GM12878 (cell line): ENCODE measurements at regions of chrX and their contacts with region 1.

Region 1: GRCh38 chrX:9708904-9709553 is 56.6 kb downstream of the GPR143 start:
- DNase-seq: peak; percentile 42
- ATAC-seq: peak; percentile 95
- H3K4me3 ChIP-seq: no peak overlapping the region
- H3K27ac ChIP-seq: no peak overlapping the region
- H3K4me1 ChIP-seq: no peaks in the 10 kb centered on the region
- H3K27me3 ChIP-seq: no peaks in the 10 kb centered on the region
- CTCF ChIP-seq: peak; percentile 81 to 91 (median 83)
- EP300 ChIP-seq: no peak
- POLR2A ChIP-seq: no peak
- RAD21 ChIP-seq: peak; percentile 91

Region 2: GRCh38 chrX:8815464-8816065 is 893.5 kb before region 1 on chrX:
- CTCF ChIA-PET with region 1: interaction called, 5 read pairs
- POLR2A ChIA-PET with region 1: no interaction called
- RAD21 ChIA-PET with region 1: no interaction called
- SMC1A ChIA-PET with region 1: interaction called, 5 read pairs
- in situ Hi-C with region 1: loop called (anchors 5 kb)
- intact Hi-C with region 1: no loop called
- DNase-seq: peak; percentile 4
- ATAC-seq: peak; percentile 79
- H3K4me3 ChIP-seq: no peak overlapping the region
- H3K27ac ChIP-seq: no peak overlapping the region
- H3K4me1 ChIP-seq: no peaks in the 10 kb centered on the region
- H3K27me3 ChIP-seq: no peaks in the 10 kb centered on the region
- CTCF ChIP-seq: peak; percentile 69 to 84 (median 78)
- EP300 ChIP-seq: no peak
- POLR2A ChIP-seq: no peak
- RAD21 ChIP-seq: peak; percentile 56

Region 3: DNA sequence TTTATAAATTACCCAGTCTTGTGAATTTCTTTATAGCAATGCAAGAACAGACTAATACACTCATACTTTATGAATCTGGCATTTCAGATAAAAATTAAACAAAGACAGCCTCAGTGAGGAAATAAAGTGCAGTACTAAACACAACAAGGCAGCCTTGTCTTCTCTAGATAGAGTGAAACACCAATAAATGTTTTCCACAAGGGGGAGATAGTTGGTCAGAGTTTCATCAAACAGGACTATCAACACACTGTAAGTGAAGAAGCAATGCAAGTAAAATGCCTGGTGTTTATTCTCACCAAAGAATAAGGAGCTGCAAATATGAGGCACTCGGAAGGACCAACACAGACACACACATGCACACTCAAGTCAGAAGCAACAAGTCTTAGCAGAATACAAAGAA is 737.9 kb before region 1 on chrX:
- CTCF ChIA-PET with region 1: no interaction called
- POLR2A ChIA-PET with region 1: no interaction called
- RAD21 ChIA-PET with region 1: no interaction called
- SMC1A ChIA-PET with region 1: no interaction called
- in situ Hi-C with region 1: loop called (anchors 5 kb)
- intact Hi-C with region 1: loop called (anchors 1 kb)
- DNase-seq: no peak
- ATAC-seq: peak; percentile 80
- H3K4me3 ChIP-seq: no peak overlapping the region
- H3K27ac ChIP-seq: no peak overlapping the region
- H3K4me1 ChIP-seq: no peaks in the 10 kb centered on the region
- H3K27me3 ChIP-seq: no peaks in the 10 kb centered on the region
- CTCF ChIP-seq: peak; percentile 15 to 36 (median 35); a peak in 3 of 6 replicates
- EP300 ChIP-seq: no peak
- POLR2A ChIP-seq: no peak
- RAD21 ChIP-seq: peak; percentile 57

Region 4: GRCh38 chrX:9464435-9465371 is 244.3 kb before region 1 on chrX and contains the start of gene TBL1X:
- CTCF ChIA-PET with region 1: no interaction called
- POLR2A ChIA-PET with region 1: no interaction called
- RAD21 ChIA-PET with region 1: interaction called, 3 read pairs
- SMC1A ChIA-PET with region 1: no interaction called
- in situ Hi-C with region 1: no loop called
- intact Hi-C with region 1: loop called (anchors 1 kb)
- DNase-seq: no peak
- ATAC-seq: peak; percentile 58
- H3K4me3 ChIP-seq: peak within 1 kb of the TSS; percentile 65
- H3K27ac ChIP-seq: peak within 1 kb of the TSS; percentile 15
- H3K4me1 ChIP-seq: peaks cover 14% of the 10 kb centered on the region
- H3K27me3 ChIP-seq: no peaks in the 10 kb centered on the region
- CTCF ChIP-seq: no peak
- EP300 ChIP-seq: no peak
- POLR2A ChIP-seq: 0 out of 2 replicates have a peak, but pooled peaks have one; percentile 38
- RAD21 ChIP-seq: no peak
- polyA plus RNA-seq, gene TBL1X: 4.4 to 4.9 TPM

Region 5: DNA sequence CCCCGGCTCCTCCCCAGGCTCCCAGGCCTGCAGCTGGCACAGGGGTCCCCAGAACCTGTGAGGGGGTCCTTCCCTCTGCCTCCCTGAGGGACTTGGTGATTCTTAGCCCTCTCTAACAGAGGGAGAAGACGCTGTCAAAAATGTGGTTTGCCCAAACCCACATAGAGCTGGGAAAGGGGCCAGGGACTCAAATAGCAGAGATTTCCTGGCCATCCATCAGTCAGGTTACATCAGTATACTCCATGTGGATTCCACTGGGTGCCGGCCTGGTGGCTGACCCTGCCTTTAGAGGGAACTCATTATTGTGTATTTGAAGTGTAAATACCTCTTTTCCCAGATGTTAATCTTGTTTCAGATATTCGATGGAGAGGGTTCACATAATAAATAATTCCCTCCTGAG is 113.9 kb before region 1 on chrX:
- CTCF ChIA-PET with region 1: no interaction called
- POLR2A ChIA-PET with region 1: no interaction called
- RAD21 ChIA-PET with region 1: no interaction called
- SMC1A ChIA-PET with region 1: no interaction called
- in situ Hi-C with region 1: no loop called
- intact Hi-C with region 1: no loop called
- DNase-seq: no peak
- ATAC-seq: no peak
- H3K4me3 ChIP-seq: no peak overlapping the region
- H3K27ac ChIP-seq: no peak overlapping the region
- H3K4me1 ChIP-seq: no peaks in the 10 kb centered on the region
- H3K27me3 ChIP-seq: no peaks in the 10 kb centered on the region
- CTCF ChIP-seq: no peak
- EP300 ChIP-seq: no peak
- POLR2A ChIP-seq: no peak
- RAD21 ChIP-seq: no peak

Region 6: DNA sequence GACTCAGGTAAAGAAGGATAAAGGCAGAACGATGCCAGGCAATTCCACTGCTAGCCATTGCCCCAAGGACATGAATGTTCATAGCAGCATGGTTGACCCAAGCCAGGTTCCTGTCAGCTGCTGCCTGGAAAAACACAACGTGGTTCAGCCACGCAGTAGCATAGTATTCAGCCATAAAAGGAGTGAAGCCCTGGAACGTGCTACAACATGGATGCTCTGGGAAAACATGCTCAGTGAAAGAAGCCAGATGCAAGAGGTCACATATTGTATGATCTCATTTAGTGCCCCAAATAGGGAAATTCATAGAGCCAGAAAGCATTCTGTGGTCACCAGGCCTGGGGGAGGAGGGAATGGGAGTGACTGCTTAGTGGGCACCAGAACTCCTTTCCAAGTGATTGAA is 73.2 kb before region 1 on chrX:
- CTCF ChIA-PET with region 1: no interaction called
- POLR2A ChIA-PET with region 1: no interaction called
- RAD21 ChIA-PET with region 1: no interaction called
- SMC1A ChIA-PET with region 1: no interaction called
- in situ Hi-C with region 1: no loop called
- intact Hi-C with region 1: no loop called
- DNase-seq: no peak
- ATAC-seq: no peak
- H3K4me3 ChIP-seq: no peak overlapping the region
- H3K27ac ChIP-seq: no peak overlapping the region
- H3K4me1 ChIP-seq: no peaks in the 10 kb centered on the region
- H3K27me3 ChIP-seq: no peaks in the 10 kb centered on the region
- CTCF ChIP-seq: no peak
- EP300 ChIP-seq: no peak
- POLR2A ChIP-seq: no peak
- RAD21 ChIP-seq: no peak

Region 7: DNA sequence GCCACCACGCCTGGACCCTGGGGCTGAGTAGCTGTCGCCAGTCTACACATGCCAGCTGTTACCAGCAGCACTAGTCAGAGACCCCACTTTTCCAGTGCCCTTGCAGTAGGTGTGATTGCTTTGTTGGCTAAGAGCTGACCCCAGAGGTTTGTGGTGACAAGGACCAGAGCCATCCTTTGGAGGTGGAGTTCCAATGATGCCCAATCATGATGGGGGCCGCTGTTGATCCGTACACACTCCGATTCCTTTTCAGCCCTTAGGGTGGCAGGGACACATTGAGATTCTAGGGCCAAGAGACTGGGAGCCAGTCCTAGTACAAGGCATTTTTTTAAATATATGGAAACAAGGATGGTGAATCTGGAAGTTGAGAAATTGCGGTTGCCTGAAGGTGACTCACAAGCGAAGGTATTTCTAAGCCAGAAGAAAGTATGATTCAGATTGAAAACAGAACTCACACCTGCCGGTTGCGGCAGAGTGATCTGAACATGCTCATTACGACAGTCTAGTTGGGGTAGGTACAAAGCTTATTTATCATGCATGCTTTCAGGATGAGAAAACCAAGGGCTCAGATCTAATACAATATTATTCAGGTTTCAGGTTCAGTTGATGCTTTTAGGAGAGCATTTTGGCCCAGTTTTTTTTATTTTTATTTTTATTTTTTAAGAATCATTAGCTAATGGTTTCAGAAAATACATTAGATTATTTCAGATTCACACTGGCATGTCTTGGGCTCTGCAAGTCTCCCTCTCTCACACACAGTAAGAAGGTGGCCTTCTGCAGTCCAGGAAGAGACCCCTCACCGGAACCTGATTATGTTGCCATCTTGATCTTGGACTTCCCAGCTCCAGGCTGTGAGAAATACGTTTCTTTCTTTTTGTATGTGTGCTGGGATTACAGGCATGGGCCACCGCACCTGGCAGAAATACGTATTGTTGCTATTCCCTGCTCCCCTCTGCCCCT is 120.6 kb after region 1 on chrX:
- CTCF ChIA-PET with region 1: no interaction called
- POLR2A ChIA-PET with region 1: no interaction called
- RAD21 ChIA-PET with region 1: no interaction called
- SMC1A ChIA-PET with region 1: no interaction called
- in situ Hi-C with region 1: no loop called
- intact Hi-C with region 1: loop called (anchors 1 kb)
- DNase-seq: peak; percentile 47
- ATAC-seq: peak; percentile 95
- H3K4me3 ChIP-seq: no peak overlapping the region
- H3K27ac ChIP-seq: peak overlapping the region; percentile 61
- H3K4me1 ChIP-seq: peaks cover 11% of the 10 kb centered on the region
- H3K27me3 ChIP-seq: no peaks in the 10 kb centered on the region; a peak in 2 of 4 replicates
- CTCF ChIP-seq: no peak
- EP300 ChIP-seq: peak; percentile 68 to 90; a peak in 2 of 4 replicates
- POLR2A ChIP-seq: no peak
- RAD21 ChIP-seq: no peak